Heart right ventricle (tissue), 16 donors: ENCODE measurements at regions of chr6 and their contacts with region 1.

Region 1: DNA sequence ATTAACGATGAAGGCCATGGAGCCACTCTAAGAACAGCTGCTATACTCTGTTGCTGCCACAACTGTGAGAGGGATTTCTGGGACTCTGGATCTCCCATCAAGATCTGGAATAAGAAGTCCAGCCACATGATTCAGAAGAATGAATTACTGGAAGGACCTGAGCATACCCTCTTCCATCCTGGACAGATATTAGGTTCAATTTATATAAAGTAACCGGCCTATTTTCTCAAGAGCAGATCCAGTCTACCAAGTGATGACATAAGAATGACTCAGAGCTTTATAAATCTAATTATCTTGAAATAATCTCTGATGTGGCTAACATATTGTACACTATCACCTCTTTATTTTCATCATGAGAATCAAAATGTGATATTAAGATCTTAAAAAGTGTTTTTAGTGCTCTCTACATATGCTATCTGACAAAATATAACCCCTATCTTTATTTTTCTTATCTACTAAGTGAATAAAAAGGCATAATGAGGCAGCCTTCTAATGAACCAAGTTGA is 45.1 kb downstream of the COL9A1 start:
- DNase-seq: no peak
- ATAC-seq: no peak
- H3K4me3 ChIP-seq: no peak overlapping the region
- H3K27ac ChIP-seq: no peak overlapping the region
- H3K4me1 ChIP-seq: peaks cover 0 to 7% (median 0%) of the 10 kb centered on the region in 9 donors
- H3K27me3 ChIP-seq: peaks cover 0 to 5% (median 0%) of the 10 kb centered on the region in 7 donors
- CTCF ChIP-seq: no peak

Region 2: DNA sequence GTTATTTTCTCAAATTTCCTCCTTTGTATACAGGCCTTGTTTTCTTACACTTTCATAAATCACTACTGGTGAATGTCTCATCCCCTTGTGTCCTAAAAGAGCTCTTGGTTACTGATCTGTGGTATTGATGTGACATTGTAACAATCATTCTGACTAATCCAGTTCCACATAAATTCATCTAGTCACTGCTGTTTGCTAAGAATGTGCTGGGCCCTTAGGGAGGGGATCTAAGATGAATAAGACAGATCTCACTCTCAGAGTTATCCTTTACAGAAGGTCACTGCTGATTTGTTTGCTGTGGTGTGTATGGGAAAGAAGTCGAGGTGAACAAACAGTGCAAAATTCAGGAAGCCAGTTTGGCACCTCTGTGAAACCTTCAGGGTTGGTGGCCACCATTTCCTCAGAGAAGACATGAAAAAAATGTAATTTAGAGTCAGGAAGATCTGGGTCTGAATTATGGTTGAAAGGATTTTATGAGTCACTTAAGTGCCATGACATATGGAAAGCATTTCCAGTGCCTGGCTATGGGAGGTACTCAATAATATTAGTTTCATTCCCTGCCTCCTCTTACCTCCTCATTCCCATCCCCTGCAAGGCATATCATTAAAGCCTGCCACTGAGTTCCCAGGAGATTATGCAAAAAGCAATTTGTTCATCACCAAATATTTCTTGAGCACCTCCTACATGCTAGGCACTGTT is 76.8 kb before region 1 on chr6:
- intact Hi-C with region 1: no loop called
- DNase-seq: no peak
- ATAC-seq: no peak
- H3K4me3 ChIP-seq: no peak overlapping the region
- H3K27ac ChIP-seq: no peak overlapping the region
- H3K4me1 ChIP-seq: no peaks in the 10 kb centered on the region
- H3K27me3 ChIP-seq: no peaks in the 10 kb centered on the region
- CTCF ChIP-seq: no peak

Region 3: DNA sequence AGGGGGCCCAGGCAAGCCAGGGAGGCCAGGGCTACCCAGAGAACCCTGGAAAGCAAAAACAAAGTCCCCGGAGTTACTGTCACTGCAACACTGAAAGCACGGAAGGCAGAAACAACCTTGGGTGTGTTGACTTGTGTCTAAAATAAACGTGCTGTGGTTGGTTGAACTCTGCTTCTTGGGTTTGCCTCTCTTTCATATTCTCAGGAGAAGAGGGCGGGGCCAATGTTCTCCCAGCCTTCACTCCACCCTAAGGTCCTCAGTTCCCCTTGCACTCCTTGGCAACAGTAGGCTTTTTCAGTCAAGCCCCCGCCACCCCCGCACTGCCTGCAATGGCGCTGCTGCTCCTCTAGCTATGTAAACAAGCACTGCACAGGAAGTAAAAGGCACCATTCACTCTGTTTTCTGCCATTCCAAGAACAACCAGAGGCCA is 15.8 kb before region 1 on chr6:
- intact Hi-C with region 1: loop called in 1 of 10 experiments (anchors 2 kb)
- DNase-seq: no peak
- ATAC-seq: peak in 3 of 8 donors; percentile 13 to 50 (median 33)
- H3K4me3 ChIP-seq: no peak overlapping the region
- H3K27ac ChIP-seq: no peak overlapping the region
- H3K4me1 ChIP-seq: no peaks in the 10 kb centered on the region
- H3K27me3 ChIP-seq: no peaks in the 10 kb centered on the region
- CTCF ChIP-seq: no peak

Region 4: GRCh38 chr6:70282312-70282918 is 24.6 kb after region 1 on chr6:
- intact Hi-C with region 1: no loop called
- DNase-seq: peak; percentile 33 to 47
- ATAC-seq: peak; percentile 55 to 84 (median 75)
- H3K4me3 ChIP-seq: peak overlapping the region in 8 of 10 donors; percentile 17 to 41 (median 37)
- H3K27ac ChIP-seq: peak overlapping the region in 1 of 10 donors; percentile 33
- H3K4me1 ChIP-seq: peaks cover 0 to 20% (median 8%) of the 10 kb centered on the region in 9 donors
- H3K27me3 ChIP-seq: peaks cover 0 to 53% (median 36%) of the 10 kb centered on the region in 7 donors
- CTCF ChIP-seq: no peak

Region 5: DNA sequence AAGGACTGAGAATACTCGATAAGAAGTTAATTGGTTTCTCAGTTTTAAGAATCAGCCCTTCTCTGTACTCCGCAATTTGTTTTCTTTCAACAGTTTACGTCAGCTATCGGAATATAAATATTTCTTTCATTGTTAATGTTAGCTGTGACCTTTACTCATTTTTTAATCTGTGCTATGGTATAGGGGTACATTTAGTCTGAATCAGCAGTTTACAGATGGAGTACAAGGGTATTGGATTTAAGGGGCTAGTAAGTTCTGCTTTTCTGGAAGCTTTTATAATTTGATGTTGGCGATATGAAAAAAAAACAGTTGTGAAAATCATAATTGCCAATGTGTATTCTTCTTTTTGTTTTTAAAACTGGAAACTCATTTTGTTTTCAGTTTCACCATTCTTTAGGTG is 178.5 kb after region 1 on chr6:
- intact Hi-C with region 1: no loop called
- DNase-seq: no peak
- ATAC-seq: no peak
- H3K4me3 ChIP-seq: no peak overlapping the region
- H3K27ac ChIP-seq: no peak overlapping the region
- H3K4me1 ChIP-seq: no peaks in the 10 kb centered on the region
- H3K27me3 ChIP-seq: no peaks in the 10 kb centered on the region
- CTCF ChIP-seq: no peak